ENCODE measurements at regions of chr11 and their contacts with region 1.

Region 1: GRCh38 chr11:96424693-96425092 is 34.9 kb downstream of the JRKL start:
- DNase-seq: no peak
- H3K4me3 ChIP-seq: no peak overlapping the region
- H3K27ac ChIP-seq: no peak overlapping the region
- H3K4me1 ChIP-seq: no peaks in the 10 kb centered on the region
- H3K27me3 ChIP-seq: no peaks in the 10 kb centered on the region
- CTCF ChIP-seq: no peak
- POLR2A ChIP-seq: no peak

Region 2: GRCh38 chr11:95835768-95836488 is 588.8 kb before region 1 on chr11:
- intact Hi-C with region 1: loop called (anchors 10 kb)
- DNase-seq: peak; percentile 49
- H3K4me3 ChIP-seq: no peak overlapping the region
- H3K27ac ChIP-seq: no peak overlapping the region
- H3K4me1 ChIP-seq: peaks cover 6% of the 10 kb centered on the region
- H3K27me3 ChIP-seq: no peaks in the 10 kb centered on the region
- CTCF ChIP-seq: peak; percentile 61 to 87 (median 80)
- POLR2A ChIP-seq: no peak

Region 3: DNA sequence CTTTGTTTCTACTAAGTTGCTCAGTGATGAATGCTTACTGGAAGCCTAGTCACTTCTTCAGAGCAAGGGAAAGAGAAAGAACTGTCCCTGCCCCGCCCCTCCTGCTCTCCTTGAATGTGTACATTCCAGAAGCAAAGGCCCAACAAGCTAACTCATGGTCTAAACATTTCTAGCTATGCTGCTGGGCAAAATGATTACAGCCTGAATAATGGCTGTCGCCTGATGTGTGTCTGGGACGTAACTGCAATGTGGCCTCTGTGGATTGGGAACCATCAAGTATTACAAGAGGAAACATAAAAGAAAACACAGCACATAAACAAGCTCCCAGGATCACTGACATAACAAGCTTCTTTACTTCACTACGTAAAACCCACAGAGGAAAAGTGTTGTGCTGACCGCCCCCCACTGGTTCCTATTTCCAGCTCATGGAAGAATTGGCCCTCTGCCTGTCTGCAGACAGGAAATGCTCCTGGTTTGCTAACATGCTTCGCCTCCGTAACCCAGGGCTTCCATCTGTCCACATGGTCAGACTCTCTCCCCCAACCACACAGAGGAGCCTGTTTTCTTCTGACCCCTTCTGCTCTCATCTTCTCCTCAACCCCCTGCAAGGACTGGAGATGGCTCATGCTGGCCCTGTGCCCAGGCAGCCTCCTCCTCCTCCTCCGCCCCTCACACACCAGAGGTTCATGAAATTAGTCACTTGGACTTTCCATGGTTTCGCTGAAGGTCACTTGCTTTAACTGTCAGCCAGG is 268.9 kb before region 1 on chr11:
- intact Hi-C with region 1: no loop called
- DNase-seq: peak; percentile 42
- H3K4me3 ChIP-seq: no peak overlapping the region
- H3K27ac ChIP-seq: peak overlapping the region; percentile 43 to 56
- H3K4me1 ChIP-seq: peaks cover 16% of the 10 kb centered on the region
- H3K27me3 ChIP-seq: no peaks in the 10 kb centered on the region
- CTCF ChIP-seq: peak in 1 of 4 experiments; percentile 11
- POLR2A ChIP-seq: no peak

Region 4: DNA sequence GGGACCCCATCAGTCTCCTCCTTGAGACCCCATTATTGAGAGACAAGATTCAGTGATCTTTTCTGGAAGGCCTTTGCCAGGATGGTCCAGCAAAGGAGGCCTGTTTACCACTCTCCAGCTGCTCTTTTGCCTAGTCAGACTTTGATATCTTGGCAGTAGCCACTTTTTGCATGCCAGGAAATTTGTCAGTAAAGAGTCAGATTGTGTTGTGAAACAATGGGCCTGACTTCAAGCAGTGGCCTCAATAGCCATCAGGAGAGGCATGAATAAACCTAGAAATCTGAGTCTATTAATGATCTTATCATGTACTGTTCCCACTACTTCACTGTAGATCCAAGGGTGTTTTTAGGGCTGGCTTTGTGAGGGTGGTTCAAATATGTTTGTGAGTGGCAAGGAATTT is 444.5 kb after region 1 on chr11:
- intact Hi-C with region 1: no loop called
- DNase-seq: no peak
- H3K4me3 ChIP-seq: no peak overlapping the region
- H3K27ac ChIP-seq: no peak overlapping the region
- H3K4me1 ChIP-seq: no peaks in the 10 kb centered on the region
- H3K27me3 ChIP-seq: no peaks in the 10 kb centered on the region
- CTCF ChIP-seq: no peak
- POLR2A ChIP-seq: no peak

Measured in prostate gland (tissue), 2 donors.